Ascending aorta (tissue), 2 donors: ENCODE measurements at regions of chr6 and their contacts with region 1.

Region 1: GRCh38 chr6:88223298-88223697 is 57.2 kb upstream of the CNR1 start:
- DNase-seq: no peak
- H3K4me3 ChIP-seq: no peak overlapping the region
- H3K27ac ChIP-seq: no peak overlapping the region
- H3K4me1 ChIP-seq: no peaks in the 10 kb centered on the region
- H3K27me3 ChIP-seq: no peaks in the 10 kb centered on the region
- CTCF ChIP-seq: no peak

Region 2: DNA sequence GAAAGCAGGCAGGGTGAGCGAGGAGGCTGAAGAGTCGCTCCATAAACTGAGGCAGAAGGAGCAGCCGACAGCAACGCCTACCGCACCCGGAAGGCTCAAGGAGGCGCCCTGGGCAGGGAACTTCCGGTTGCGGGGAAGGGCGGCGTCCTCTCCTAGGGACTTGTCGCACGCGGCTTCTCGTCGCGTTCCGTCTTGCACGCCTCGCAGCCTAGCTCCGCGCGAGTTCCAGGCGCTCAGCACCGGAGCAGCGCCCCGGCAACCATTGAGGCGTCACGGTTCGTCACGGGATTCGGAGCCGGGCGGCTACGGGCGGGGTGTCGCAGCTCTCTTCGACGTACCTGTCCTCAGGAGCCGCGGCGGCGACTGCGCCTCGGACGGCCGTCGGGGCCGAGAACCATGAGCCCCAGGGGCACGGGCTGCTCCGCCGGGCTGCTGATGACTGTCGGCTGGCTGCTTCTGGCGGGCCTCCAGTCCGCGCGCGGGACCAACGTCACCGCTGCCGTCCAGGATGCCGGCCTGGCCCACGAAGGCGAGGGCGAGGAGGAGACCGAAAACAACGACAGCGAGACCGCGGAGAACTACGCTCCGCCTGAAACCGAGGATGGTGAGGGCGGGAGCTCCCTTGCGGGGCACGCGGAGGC is 175.7 kb before region 1 on chr6 and contains the start of gene SPACA1:
- intact Hi-C with region 1: no loop called
- DNase-seq: no peak
- H3K4me3 ChIP-seq: no peak within 1 kb of the TSS
- H3K27ac ChIP-seq: no peak within 1 kb of the TSS
- H3K4me1 ChIP-seq: no peaks in the 10 kb centered on the region
- H3K27me3 ChIP-seq: no peaks in the 10 kb centered on the region
- CTCF ChIP-seq: no peak
- total RNA-seq, gene SPACA1: not detected

Region 3: GRCh38 chr6:88244721-88245120 is 21.4 kb after region 1 on chr6:
- intact Hi-C with region 1: loop called (anchors 2 kb)
- DNase-seq: no peak
- H3K4me3 ChIP-seq: no peak overlapping the region
- H3K27ac ChIP-seq: no peak overlapping the region
- H3K4me1 ChIP-seq: no peaks in the 10 kb centered on the region
- H3K27me3 ChIP-seq: no peaks in the 10 kb centered on the region
- CTCF ChIP-seq: no peak